Aorta (tissue), 5 donors: ENCODE measurements at regions of chrX and their contacts with region 1.

Region 1: GRCh38 chrX:120250522-120251271 is at the start of gene ZBTB33:
- DNase-seq: peak; percentile 95 to 96
- ATAC-seq: peak; percentile 98
- H3K4me3 ChIP-seq: peak within 1 kb of the TSS; percentile 71 to 95
- H3K27ac ChIP-seq: peak within 1 kb of the TSS in 1 of 2 donors; percentile 77
- H3K4me1 ChIP-seq: no peaks in the 10 kb centered on the region
- H3K27me3 ChIP-seq: no peaks in the 10 kb centered on the region
- total RNA-seq, gene ZBTB33: 7.9 to 12.1 TPM

Region 2: GRCh38 chrX:119852382-119853353 is 398.0 kb before region 1 on chrX and contains the start of gene UPF3B:
- intact Hi-C with region 1: no loop called
- DNase-seq: peak; percentile 97 to 98
- ATAC-seq: peak; percentile 94
- H3K4me3 ChIP-seq: peak within 1 kb of the TSS; percentile 38 to 57
- H3K27ac ChIP-seq: peak within 1 kb of the TSS in 1 of 2 donors; percentile 71
- H3K4me1 ChIP-seq: no peaks in the 10 kb centered on the region
- H3K27me3 ChIP-seq: no peaks in the 10 kb centered on the region
- total RNA-seq, gene UPF3B: 6.7 to 9.5 TPM

Region 3: GRCh38 chrX:120468825-120469525 is 218.3 kb after region 1 on chrX and contains the start of gene LAMP2:
- intact Hi-C with region 1: loop called in 1 of 2 experiments (anchors 10 kb)
- DNase-seq: peak; percentile 93 to 95
- ATAC-seq: peak; percentile 93
- H3K4me3 ChIP-seq: peak within 1 kb of the TSS; percentile 21 to 37
- H3K27ac ChIP-seq: peak within 1 kb of the TSS in 1 of 2 donors; percentile 91
- H3K4me1 ChIP-seq: no peaks in the 10 kb centered on the region
- H3K27me3 ChIP-seq: peaks cover 0 to 2% of the 10 kb centered on the region in 2 donors
- total RNA-seq, gene LAMP2: 71.8 to 101 TPM